Activated CD8-positive, alpha-beta T cell treated with anti-CD3 and anti-CD28 coated beads, Interleukin-2, amount 10 ng/mL, durations not matched to agents 7 days and 5 days (primary cell): ENCODE measurements at regions of chr2 and their contacts with region 1.

Region 1: DNA sequence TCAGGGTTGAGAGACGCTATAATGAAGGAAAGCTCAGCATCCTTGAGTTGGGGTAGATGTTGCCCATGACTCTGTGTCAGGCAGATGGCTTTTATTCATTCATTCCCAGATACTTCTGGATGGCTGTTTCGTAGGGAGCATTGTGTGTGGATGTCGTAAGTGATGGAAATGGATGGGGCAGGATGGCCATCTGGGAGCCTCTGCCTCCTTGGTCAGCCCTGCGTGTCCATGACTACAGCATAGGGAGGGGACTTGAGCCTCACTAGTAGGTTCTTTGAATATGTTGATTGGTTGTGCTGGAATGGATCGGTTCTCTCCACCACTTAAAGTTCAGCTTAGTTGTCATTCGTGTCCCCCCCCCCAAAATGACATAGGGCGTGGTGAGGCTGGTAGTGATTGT is 44.9 kb downstream of the TGOLN2 start:
- DNase-seq: no peak
- ATAC-seq: no peak
- H3K4me3 Mint-ChIP-seq: no peak overlapping the region
- H3K27ac Mint-ChIP-seq: no peak overlapping the region
- H3K4me1 Mint-ChIP-seq: peaks cover 10% of the 10 kb centered on the region
- H3K27me3 Mint-ChIP-seq: peaks cover 2% of the 10 kb centered on the region

Region 2: DNA sequence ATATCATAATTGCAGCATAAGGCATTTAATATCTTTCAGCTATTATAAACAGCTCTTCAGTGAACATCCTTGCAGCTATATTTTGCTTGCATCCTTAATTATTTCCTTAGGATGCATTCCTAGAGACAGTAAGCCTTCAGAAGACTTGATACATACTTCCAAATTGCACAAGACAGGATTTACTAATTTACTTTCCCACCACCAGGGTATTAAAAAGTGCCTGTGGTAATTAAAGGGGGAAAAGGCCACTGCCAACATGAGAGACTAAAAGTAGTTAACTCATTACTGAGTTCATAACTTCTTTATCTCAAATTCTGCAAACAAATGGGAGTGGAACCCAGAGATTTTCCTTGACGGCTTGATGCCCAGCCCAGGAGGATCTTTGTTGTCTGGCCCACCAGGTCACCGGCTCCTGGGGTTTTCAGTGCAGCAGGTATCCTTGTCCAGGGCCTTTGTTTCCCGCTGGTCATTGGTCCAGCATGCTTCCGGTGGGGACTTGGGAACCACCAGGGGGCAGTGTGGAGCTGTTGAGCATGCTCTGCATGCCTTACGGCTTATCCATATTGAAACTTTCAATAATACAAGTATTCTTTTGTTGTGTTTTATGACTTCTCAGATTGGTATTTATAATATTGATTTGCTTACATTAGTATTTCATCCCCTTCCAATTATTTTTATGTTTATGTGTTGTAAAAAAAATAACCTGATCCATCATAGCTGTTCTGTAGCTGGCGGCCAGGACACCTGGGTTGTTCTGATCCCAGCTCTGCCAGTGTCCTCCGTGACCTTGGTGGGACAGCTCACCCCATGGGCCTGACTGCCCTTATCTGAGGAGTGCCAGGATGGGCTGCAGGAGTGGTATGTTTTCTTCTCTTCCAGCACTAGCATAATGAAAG is 16.5 kb before region 1 on chr2:
- CTCF ChIA-PET with region 1: interaction called, 26 read pairs
- POLR2A ChIA-PET with region 1: no interaction called
- DNase-seq: peak; percentile 80
- ATAC-seq: peak; percentile 81
- H3K4me3 Mint-ChIP-seq: no peak overlapping the region
- H3K27ac Mint-ChIP-seq: no peak overlapping the region
- H3K4me1 Mint-ChIP-seq: no peaks in the 10 kb centered on the region
- H3K27me3 Mint-ChIP-seq: peaks cover 10% of the 10 kb centered on the region